Activated CD4-positive, alpha-beta T cell treated with anti-CD3 and anti-CD28 coated beads for 36 hours (primary cell): ENCODE measurements at regions of chr22 and their contacts with region 1.

Region 1: DNA sequence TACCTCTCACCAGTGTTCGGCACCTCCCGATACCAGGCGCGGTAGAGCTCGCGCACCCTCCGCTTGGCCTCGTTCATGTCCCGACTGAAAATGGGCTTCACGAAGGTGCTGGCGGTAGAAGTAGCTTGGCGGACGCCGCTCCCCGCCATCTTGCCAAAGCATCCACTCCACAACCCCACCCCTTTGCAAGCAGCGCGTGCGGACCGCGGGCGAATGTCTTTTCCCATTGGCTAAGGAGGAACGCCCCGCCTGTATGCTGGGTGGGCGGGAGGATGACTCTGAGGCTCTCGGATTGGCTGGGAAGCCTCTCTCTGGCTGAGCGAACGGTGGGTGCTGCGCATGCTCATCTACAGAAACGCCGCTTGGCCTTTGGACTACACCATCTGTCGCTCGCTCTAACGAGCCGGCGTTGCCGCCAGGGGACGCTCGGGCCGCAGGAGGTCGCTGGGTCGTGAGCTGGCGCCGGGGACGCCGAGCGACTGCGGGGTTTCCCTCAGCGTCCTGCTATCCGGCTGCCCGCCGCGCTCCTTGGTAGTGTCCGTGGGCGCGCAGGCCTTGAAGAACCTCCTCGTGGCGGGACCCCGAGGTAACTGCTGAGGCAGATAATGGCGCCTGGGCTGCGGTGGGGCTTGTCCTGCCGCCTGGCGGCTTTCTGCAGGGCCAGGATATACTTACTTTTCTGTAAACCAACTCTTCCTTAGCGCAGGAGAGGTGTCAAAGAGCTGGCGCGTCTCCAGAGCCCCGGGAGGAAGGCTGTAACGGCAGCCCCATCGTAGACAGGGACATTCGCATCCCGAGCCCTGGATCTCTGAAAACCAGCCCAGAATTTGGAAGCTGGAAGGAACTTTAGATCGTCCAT is at the start of gene NDUFA6:
- DNase-seq: peak; percentile 99
- ATAC-seq: peak; percentile 97
- H3K4me3 Mint-ChIP-seq: peak within 1 kb of the TSS; percentile 96
- H3K27ac Mint-ChIP-seq: peak within 1 kb of the TSS; percentile 99
- H3K4me1 Mint-ChIP-seq: peaks cover 30% of the 10 kb centered on the region
- H3K27me3 Mint-ChIP-seq: no peaks in the 10 kb centered on the region
- total RNA-seq, gene NDUFA6: 123 to 144 TPM

Region 2: GRCh38 chr22:41832553-41833368 is 258.1 kb before region 1 on chr22 and contains the start of gene SREBF2:
- CTCF ChIA-PET with region 1: no interaction called
- POLR2A ChIA-PET with region 1: interaction called, 3 read pairs
- intact Hi-C with region 1: loop called in 1 of 2 experiments (anchors 2 kb)
- DNase-seq: peak; percentile 100
- ATAC-seq: peak; percentile 94
- H3K4me3 Mint-ChIP-seq: peak within 1 kb of the TSS; percentile 96
- H3K27ac Mint-ChIP-seq: peak within 1 kb of the TSS; percentile 99
- H3K4me1 Mint-ChIP-seq: peaks cover 45% of the 10 kb centered on the region
- H3K27me3 Mint-ChIP-seq: no peaks in the 10 kb centered on the region
- total RNA-seq, gene SREBF2: 101 to 105 TPM

Region 3: DNA sequence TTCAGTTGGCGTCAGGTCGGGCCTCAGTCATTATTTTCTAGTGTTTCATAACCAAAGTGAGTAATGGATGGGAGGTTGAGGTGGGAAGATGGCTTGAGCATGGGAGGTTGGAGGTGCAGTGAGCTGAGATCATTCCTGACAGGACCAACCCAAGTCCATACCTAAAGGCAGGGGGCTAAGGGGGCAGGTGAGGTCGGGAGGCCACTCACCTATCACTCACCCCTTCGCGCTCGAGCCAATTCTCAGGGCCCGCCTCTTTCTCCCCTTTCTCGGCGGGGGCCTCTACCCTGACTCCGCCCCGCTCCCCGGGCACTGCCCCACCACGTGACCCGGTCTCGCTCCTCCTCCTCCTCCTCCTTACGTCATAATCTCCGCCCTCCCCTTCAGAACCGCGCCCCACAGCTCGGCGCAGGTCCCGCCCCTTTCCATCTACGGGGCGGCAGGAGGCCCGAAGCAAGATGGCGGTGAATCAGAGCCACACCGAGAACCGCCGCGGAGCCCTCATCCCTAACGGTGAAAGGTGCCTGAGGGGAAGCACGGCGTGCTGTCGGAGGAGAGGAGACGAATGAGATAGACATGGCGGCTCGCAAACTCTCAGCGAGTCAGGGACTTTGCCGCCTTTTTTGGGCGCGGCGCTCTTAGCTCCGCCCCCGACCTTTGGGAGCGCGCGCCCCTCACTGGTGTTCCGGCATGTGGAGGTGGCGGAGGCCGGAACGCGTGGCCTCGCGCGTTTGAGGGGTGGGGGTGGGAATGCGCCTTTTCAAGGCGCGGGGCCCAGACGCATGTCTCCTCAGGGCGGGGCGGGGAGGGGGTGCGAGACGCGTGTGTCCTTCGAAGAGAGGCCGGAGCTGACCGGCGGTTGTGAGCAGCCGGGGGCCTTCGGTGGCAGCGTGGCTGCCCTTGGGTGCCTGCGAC is 92.2 kb before region 1 on chr22 and contains the start of gene WBP2NL:
- CTCF ChIA-PET with region 1: no interaction called
- POLR2A ChIA-PET with region 1: interaction called, 7 read pairs
- intact Hi-C with region 1: loop called in 1 of 2 experiments (anchors 1 kb)
- DNase-seq: peak; percentile 92
- ATAC-seq: peak; percentile 97
- H3K4me3 Mint-ChIP-seq: peak within 1 kb of the TSS; percentile 77
- H3K27ac Mint-ChIP-seq: peak within 1 kb of the TSS; percentile 97
- H3K4me1 Mint-ChIP-seq: peaks cover 20% of the 10 kb centered on the region
- H3K27me3 Mint-ChIP-seq: no peaks in the 10 kb centered on the region
- total RNA-seq, gene WBP2NL: 0.30 to 0.54 TPM

Region 4: DNA sequence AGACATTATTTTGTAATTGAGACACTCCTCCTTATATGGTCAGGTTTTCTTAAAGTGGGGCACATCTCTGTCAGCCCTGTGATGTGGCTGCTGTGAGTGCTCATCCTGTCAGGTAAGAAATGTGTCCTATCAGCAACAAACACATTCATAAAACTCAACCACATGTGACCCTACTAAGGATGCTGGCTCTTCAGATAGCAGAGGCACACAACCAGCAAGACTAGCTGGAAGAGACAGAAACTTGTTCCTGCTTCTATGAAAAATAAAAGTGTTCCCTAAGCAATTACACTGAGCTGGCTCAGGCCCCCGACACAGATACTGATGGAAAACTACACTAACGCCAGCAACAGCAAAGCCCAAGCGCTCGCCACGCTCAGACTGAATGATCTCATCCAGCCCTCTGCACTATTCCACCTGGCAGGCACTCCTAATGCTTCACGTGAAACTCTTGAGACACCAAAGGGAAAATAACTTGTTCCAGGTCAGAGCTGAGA is 89.6 kb after region 1 on chr22:
- CTCF ChIA-PET with region 1: no interaction called
- POLR2A ChIA-PET with region 1: interaction called, 3 read pairs
- intact Hi-C with region 1: loop called in 1 of 2 experiments (anchors 5 kb)
- DNase-seq: peak; percentile 72
- ATAC-seq: peak; percentile 80
- H3K4me3 Mint-ChIP-seq: peak overlapping the region; percentile 42
- H3K27ac Mint-ChIP-seq: peak overlapping the region; percentile 80
- H3K4me1 Mint-ChIP-seq: peaks cover 90% of the 10 kb centered on the region
- H3K27me3 Mint-ChIP-seq: no peaks in the 10 kb centered on the region

Region 5: DNA sequence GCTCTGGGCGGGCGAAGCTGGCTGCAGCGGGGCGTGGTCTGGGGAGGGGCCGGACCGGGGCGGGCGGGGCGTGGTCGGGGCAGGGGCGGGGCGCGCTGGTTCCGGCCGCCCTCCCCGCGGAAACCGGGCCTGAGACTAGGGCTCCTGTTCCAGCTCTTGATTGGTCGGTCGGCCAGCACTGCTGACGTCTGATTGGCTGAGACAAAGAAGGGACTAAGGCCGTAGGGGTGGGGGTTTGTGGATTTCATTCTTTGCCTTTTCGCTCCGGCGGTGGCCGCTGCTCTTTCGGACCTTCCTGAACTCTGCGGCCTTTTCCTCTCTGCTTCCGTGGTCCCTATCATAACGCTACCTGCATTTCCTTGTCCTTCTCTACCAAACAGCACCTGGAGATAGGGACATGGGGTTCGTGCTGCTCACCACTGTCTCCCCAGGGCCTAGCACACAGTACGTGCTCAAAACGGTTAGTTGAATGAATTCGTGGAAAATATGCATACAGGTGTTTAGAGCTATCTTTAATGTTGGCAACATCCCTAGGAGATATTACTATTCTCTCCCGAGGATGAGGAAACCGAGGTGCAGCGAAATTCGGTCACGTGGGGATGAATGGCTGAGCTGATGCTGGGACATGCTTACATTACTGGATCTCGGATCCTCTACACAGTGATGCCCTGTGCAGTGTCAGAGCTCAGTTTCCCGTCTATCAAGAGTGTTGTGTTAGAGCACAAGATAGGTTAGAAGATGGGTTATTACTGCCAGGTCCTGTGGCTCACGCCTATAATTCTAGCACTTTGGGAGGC is 278.6 kb after region 1 on chr22:
- CTCF ChIA-PET with region 1: interaction called, 4 read pairs
- POLR2A ChIA-PET with region 1: no interaction called
- intact Hi-C with region 1: loop called in 1 of 2 experiments (anchors 1 kb)
- DNase-seq: peak; percentile 91
- ATAC-seq: peak; percentile 99
- H3K4me3 Mint-ChIP-seq: peak overlapping the region; percentile 82
- H3K27ac Mint-ChIP-seq: peak overlapping the region; percentile 53
- H3K4me1 Mint-ChIP-seq: peaks cover 17% of the 10 kb centered on the region
- H3K27me3 Mint-ChIP-seq: peaks cover 27% of the 10 kb centered on the region

Region 6: DNA sequence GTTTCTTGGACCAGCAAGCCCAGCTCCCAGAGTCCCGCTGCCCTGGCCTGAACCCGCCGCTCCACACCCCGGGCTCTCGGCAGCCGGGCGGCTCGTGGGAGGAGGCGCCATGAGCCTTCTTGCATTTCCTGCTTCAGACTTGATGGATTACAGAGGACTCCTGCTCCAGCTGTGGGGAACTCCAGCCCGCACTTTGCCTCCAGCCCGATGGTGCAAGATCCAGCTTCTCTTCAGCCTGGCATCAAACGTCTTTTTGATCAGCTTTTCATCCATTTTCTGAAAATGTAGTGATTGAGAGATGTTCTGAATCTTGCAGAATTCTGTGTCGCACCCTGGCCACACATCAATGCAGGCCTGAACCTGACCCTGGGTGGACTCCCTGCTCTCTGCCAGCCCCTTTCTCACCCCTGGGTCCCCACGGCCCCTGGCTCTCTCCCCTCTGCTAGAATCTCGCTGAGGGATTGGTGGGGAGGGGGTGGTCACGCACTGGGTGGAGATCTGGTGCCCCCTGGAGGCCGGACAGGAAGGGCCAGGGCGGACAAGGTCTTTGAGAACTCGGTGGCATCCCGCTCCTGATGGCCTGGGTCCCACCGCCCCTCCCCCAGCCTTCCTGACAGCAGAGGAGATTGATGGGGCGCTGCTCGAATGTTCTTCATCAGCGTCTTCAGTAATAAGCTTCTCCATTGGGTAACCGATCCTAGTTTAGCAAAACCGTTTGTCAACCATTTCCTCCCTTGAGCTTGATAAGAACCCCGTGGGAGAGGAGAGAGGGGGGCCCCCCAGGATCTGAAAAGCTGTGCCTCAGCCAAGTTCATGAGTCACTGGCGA is 353.5 kb after region 1 on chr22:
- CTCF ChIA-PET with region 1: interaction called, 24 read pairs
- POLR2A ChIA-PET with region 1: interaction called, 5 read pairs
- intact Hi-C with region 1: loop called (anchors 1 kb)
- DNase-seq: peak; percentile 88
- ATAC-seq: peak; percentile 69
- H3K4me3 Mint-ChIP-seq: peak overlapping the region; percentile 68
- H3K27ac Mint-ChIP-seq: peak overlapping the region; percentile 78
- H3K4me1 Mint-ChIP-seq: peaks cover 32% of the 10 kb centered on the region
- H3K27me3 Mint-ChIP-seq: no peaks in the 10 kb centered on the region